Body of pancreas (tissue), 4 donors: ENCODE measurements at regions of chr6 and their contacts with region 1.

Region 1: GRCh38 chr6:20474874-20475542 is 59.2 kb upstream of the CDKAL1 start:
- DNase-seq: no peak
- ATAC-seq: no peak
- H3K4me3 ChIP-seq: no peak overlapping the region
- H3K27ac ChIP-seq: no peak overlapping the region
- H3K4me1 ChIP-seq: no peaks in the 10 kb centered on the region
- H3K27me3 ChIP-seq: no peaks in the 10 kb centered on the region
- CTCF ChIP-seq: no peak
- POLR2A ChIP-seq: no peak

Region 2: DNA sequence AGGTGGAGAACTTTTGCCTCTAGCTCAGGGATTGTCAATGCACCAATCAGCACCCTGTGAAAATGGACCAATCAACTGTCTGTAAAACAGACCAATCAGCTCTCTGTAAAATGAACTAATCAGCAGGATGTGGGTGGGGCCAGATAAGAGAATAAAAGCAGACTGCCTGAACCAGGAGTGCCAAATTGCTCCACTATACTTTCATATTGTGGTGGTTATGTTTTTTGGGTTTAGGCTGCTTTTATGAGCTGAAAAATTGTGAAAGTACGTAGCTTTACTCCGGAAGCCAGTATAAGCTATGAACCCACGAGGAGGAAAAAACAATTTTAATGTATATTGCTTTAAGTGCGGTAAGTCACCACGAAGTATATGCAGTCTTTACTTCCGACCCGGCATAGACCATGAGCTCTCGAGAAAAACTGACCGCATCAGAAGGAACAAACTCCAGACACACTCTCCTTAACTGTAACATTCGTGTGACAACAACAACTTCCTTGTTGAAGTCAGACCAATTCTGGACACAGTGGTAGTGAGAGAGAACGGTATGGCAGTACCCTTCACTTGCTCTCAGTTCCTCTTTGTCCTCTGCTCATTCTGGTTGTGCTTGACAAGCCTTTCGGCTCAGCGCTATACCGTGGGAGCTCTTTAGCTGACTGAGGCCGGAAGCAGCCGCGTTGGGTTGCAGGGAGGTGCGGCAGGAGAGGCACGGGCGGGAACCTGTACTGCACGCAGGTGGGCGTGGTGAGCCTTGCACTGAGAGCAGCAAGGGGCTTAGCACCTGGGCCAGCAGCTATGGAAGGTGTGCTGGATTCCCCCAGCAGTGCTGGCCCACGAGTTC is 155.3 kb before region 1 on chr6:
- intact Hi-C with region 1: loop called (anchors 5 kb)
- DNase-seq: peak in 2 of 4 donors; percentile 21 to 47
- ATAC-seq: no peak
- H3K4me3 ChIP-seq: no peak overlapping the region
- H3K27ac ChIP-seq: peak overlapping the region in 1 of 4 donors; percentile 52
- H3K4me1 ChIP-seq: no peaks in the 10 kb centered on the region
- H3K27me3 ChIP-seq: no peaks in the 10 kb centered on the region
- CTCF ChIP-seq: no peak
- POLR2A ChIP-seq: peak in 2 of 3 donors; percentile 16 to 30

Region 3: DNA sequence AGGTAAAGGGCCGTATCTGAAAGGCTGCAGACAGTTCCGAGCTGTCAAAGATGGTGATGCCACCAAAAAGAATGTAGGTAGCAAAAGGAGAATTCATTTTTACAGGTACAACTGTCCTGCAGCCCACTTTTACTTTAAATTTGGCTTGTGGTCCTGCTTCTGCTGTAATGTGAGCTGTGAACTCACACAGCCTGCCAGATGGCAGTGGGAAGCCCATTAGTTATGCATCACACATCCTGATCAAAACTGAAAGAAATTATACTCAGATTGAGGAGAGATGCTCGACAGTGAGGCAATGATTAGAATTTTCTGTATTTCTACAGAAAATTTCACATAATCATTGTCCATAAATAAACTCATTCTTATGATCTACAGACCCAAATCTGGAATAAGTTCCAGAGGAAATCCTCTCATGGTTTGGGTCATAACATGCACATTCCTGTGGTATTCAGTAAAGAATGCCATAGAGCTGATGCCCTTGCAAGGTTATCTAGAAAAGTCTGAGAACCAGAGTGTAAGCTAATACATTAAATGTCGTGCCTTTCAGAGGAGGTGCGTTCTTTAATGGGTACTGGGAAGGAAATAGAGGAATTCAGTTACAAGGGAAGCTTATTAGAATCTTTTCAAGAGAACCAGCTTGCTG is 97.3 kb before region 1 on chr6:
- intact Hi-C with region 1: no loop called
- DNase-seq: no peak
- ATAC-seq: no peak
- H3K4me3 ChIP-seq: no peak overlapping the region
- H3K27ac ChIP-seq: no peak overlapping the region
- H3K4me1 ChIP-seq: no peaks in the 10 kb centered on the region
- H3K27me3 ChIP-seq: no peaks in the 10 kb centered on the region
- CTCF ChIP-seq: no peak
- POLR2A ChIP-seq: no peak